ENCODE measurements at regions of chr9 and their contacts with region 1.

Region 1: DNA sequence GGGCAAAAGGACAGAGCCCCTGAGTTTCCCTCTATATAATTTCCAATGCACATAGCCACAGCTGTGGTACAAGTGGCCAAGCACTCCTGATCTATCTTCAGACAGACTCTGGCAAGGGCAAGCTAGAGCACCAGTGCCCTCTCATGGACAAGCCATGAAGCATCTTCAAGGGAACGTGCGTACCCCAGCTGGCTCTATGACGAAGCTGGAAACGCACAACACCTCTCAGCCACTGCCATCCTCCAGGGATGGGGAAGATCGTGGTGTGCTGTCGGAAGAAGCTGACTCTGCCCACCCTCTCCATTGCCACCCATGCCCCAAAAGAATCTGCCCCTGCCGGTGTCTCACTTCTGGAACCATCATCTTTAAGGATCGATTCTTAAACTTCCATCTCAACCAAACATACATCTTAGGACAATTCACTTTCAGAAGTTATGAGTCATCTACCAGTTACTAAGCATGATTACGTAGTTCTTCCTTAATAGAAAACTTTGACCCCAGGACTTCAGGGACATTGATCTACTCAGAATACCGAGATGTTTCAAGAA is 482.9 kb downstream of the AGTPBP1 start:
- DNase-seq: peak; percentile 83
- H3K4me3 Mint-ChIP-seq: peak overlapping the region; percentile 7
- H3K27ac Mint-ChIP-seq: no peak overlapping the region
- H3K4me1 Mint-ChIP-seq: peaks cover 5% of the 10 kb centered on the region
- H3K27me3 Mint-ChIP-seq: no peaks in the 10 kb centered on the region
- CTCF ChIP-seq: peak; percentile 96

Region 2: DNA sequence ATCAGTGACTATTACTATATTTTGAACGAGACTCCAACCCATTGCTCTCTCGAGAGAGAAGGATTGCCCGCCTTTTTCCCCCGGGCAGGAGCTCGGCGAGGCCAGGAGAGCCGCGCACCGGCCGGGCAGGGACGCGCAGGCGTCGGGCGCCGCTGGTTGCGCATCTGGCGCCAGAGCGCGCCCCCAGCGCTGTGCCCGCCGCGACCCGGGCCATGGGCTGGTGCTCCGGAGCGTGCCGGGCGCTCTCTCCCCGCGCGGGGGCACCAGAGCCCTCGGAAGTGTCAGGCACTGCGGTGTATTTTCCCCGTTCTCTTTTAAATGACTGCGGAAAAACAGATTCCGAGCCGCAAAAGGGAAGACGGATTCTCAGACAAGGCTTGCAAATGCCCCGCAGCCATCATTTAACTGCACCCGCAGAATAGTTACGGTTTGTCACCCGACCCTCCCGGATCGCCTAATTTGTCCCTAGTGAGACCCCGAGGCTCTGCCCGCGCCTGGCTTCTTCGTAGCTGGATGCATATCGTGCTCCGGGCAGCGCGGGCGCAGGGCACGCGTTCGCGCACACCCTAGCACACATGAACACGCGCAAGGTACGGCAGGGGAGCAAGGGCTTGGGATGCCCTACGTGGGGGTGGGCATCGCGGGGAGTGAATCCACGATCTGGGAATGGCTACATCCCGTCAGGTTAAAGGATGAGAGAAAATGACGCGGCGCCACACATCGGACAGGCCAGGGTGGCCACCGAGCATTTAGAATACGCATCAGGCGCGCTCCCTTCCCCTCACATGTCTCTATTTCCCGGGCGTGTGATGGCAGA is 590.5 kb before region 1 on chr9:
- CTCF ChIA-PET with region 1: interaction called, 4 read pairs
- POLR2A ChIA-PET with region 1: interaction called, 4 read pairs
- intact Hi-C with region 1: loop called (anchors 1 kb)
- DNase-seq: peak; percentile 59
- H3K4me3 Mint-ChIP-seq: peak overlapping the region; percentile 80
- H3K27ac Mint-ChIP-seq: no peak overlapping the region
- H3K4me1 Mint-ChIP-seq: peaks cover 14% of the 10 kb centered on the region
- H3K27me3 Mint-ChIP-seq: peaks cover 25% of the 10 kb centered on the region
- CTCF ChIP-seq: peak; percentile 50

Region 3: DNA sequence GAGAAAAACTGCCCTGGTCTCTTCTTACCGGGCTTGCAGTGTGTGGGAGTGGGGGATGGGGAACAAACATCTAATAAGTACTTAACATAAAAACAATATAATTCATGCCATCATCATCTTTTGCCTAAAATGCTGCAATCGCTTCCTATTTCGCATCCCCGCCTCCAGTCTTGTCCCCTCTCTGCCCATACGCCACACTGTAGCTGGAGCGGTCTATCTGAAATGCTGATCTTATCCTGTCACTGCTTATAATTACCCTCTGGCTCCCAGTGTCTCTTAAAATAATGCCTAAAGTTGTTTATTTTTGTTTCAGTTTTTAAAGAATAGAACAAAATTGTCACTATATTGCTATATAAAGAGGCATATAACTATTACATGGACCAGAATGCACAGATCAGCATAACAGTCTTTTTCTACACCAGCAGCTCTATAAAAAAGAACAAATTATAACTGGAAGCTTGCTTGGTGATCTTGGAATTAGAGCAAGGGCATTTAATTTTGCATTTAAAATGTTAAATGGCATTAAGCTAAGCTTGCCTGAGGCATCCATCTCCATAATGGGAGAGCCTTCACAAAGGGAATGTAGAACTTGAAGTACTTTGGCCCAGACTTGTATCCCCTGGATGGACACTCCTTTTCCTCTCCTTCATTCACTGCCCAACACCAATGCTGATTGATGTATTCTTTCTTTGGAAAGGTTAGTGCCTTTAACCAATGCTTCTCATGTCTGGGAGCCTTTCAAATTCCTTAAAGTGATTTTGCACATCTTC is 577.2 kb before region 1 on chr9:
- CTCF ChIA-PET with region 1: no interaction called
- POLR2A ChIA-PET with region 1: no interaction called
- intact Hi-C with region 1: no loop called
- DNase-seq: no peak
- H3K4me3 Mint-ChIP-seq: no peak overlapping the region
- H3K27ac Mint-ChIP-seq: no peak overlapping the region
- H3K4me1 Mint-ChIP-seq: no peaks in the 10 kb centered on the region
- H3K27me3 Mint-ChIP-seq: no peaks in the 10 kb centered on the region
- CTCF ChIP-seq: no peak

Region 4: DNA sequence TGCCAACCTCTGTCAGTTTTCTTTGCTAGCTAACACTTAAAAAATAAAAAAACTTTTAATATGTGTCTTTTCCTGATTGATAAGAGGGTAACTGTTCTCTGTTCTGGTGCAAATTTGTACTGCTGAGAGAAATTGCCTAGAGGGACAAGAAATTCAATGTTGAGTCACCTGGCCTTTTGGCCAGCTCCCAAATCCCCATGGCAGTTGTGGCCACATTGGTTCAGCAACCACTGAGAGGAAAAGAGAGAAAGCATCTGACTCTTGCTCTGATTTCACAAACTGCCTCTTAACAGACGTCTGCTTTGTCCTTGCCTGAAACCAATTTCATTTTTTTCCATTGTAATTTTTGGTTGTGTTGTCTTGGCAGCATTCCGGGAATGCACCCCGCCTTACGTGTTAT is 547.0 kb before region 1 on chr9:
- CTCF ChIA-PET with region 1: interaction called, 3 read pairs
- POLR2A ChIA-PET with region 1: no interaction called
- intact Hi-C with region 1: loop called (anchors 5 kb)
- DNase-seq: peak; percentile 96
- H3K4me3 Mint-ChIP-seq: peak overlapping the region; percentile 64
- H3K27ac Mint-ChIP-seq: peak overlapping the region; percentile 96
- H3K4me1 Mint-ChIP-seq: peaks cover 32% of the 10 kb centered on the region
- H3K27me3 Mint-ChIP-seq: no peaks in the 10 kb centered on the region
- CTCF ChIP-seq: no peak

Region 5: DNA sequence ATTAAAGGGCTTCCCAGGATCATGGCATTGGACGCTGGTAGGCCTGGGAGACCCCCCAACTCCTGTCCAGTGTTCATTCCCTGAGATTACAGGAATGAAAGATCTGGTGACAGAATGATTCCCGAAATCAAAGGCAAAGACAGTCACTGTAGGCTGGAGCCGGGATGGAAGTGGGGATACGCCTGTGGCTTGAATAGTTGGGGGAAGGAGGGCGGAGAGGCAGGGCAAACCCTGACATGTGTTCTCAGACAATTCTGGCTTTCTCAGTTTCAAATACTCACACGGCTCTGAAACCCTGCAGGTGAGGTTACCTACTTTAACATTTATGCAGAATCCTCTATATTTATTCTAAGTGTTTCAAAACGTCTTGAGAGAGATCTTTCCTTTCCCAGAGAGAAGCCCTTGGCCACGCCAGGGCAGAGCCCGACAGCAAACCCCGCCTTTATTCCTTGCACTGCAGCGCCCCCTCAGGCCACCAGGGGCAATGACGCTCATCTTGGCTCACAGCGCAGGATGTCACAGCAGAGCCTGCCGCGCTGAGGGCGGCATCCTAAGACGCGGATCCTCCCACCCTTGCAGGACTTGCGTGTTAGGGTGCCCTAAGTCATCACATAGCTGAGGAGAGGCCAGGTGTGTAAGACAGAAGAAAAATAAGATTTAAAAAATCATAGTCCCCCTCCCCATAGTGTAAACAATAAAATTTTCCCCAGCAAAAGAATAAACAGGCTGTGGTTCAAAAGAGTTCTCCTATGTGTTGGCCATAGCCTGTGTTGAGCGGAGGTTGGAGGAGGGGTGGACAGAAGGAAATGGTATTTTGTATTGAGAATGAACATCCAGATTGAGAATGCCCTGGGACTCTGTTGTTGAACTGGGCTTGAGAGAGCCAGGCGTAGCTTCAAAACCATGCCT is 304.8 kb before region 1 on chr9:
- CTCF ChIA-PET with region 1: interaction called, 7 read pairs
- POLR2A ChIA-PET with region 1: no interaction called
- intact Hi-C with region 1: loop called (anchors 5 kb)
- DNase-seq: peak; percentile 75
- H3K4me3 Mint-ChIP-seq: no peak overlapping the region
- H3K27ac Mint-ChIP-seq: no peak overlapping the region
- H3K4me1 Mint-ChIP-seq: peaks cover 7% of the 10 kb centered on the region
- H3K27me3 Mint-ChIP-seq: no peaks in the 10 kb centered on the region
- CTCF ChIP-seq: peak; percentile 90

Region 6: DNA sequence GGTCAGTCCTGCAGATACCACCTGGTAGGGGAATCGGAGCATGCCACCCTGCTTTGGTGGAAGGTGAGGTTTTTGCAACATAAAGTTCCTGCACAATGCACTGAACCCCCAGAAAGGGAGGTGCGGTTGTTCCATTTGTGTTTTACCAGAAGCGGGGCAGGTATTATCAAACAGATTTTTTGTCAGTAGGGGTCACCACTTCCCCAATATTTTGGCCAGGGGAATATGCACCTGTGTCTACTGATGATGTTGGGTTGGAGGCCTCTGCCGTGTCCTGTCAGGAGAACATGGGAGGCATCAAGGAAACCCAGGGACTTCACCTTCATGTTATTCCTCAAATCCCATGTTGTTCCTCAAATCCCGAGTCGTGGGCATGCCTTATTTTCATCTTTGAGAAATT is 150.7 kb before region 1 on chr9:
- CTCF ChIA-PET with region 1: no interaction called
- POLR2A ChIA-PET with region 1: no interaction called
- intact Hi-C with region 1: loop called (anchors 1 kb)
- DNase-seq: peak; percentile 18
- H3K4me3 Mint-ChIP-seq: no peak overlapping the region
- H3K27ac Mint-ChIP-seq: no peak overlapping the region
- H3K4me1 Mint-ChIP-seq: no peaks in the 10 kb centered on the region
- H3K27me3 Mint-ChIP-seq: peaks cover 19% of the 10 kb centered on the region
- CTCF ChIP-seq: no peak

Region 7: GRCh38 chr9:85425153-85425611 is 166.3 kb after region 1 on chr9:
- CTCF ChIA-PET with region 1: interaction called, 6 read pairs
- POLR2A ChIA-PET with region 1: no interaction called
- intact Hi-C with region 1: loop called (anchors 1 kb)
- DNase-seq: peak; percentile 72
- H3K4me3 Mint-ChIP-seq: no peak overlapping the region
- H3K27ac Mint-ChIP-seq: no peak overlapping the region
- H3K4me1 Mint-ChIP-seq: peaks cover 5% of the 10 kb centered on the region
- H3K27me3 Mint-ChIP-seq: peaks cover 17% of the 10 kb centered on the region
- CTCF ChIP-seq: peak; percentile 78

Measured in MCF 10A (cell line).